ENCODE measurements at regions of chr18 and their contacts with region 1.

Region 1: GRCh38 chr18:77132371-77133050 is at the start of gene MBP:
- DNase-seq: peak; percentile 76
- ATAC-seq: peak; percentile 66
- H3K4me3 Mint-ChIP-seq: peak within 1 kb of the TSS; percentile 97
- H3K27ac Mint-ChIP-seq: peak within 1 kb of the TSS; percentile 94
- H3K4me1 Mint-ChIP-seq: peaks cover 62% of the 10 kb centered on the region
- H3K27me3 Mint-ChIP-seq: no peaks in the 10 kb centered on the region
- total RNA-seq, gene MBP: 86.5 to 87.0 TPM

Region 2: DNA sequence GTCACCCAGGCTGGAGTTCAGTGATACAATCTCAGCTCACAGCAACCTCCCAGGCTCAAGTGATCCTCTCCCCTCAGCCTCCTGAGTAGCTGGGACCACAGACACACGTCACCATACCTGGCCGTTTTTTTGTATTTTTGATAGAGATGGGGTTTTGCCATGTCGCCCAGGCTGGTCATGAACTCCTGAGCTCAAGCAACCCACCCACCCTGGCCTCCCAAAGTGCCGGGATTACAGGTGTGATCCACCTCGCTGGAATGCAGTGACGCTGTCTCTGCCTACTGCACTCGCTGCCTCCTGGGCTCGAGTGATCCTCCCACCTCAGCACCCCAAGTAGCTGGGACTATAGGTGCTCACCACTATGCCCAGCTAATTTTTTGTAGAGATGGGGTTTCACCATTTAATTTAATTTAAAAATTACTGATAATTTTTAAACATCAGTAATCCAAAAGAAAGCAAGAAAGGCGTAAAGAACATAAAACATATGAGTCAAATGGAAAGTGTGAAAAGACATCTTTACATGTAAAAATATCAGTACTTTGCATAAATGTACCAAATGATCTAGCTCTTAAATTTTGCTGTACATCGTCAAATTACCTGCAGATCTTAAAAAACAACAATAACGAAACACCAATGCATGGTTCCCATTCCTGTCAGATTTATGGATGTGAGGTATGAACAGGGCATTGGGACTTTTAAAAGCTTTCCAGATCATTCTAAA is 312.9 kb before region 1 on chr18:
- CTCF ChIA-PET with region 1: no interaction called
- POLR2A ChIA-PET with region 1: no interaction called
- DNase-seq: no peak
- ATAC-seq: no peak
- H3K4me3 Mint-ChIP-seq: peak overlapping the region; percentile 48
- H3K27ac Mint-ChIP-seq: peak overlapping the region; percentile 50
- H3K4me1 Mint-ChIP-seq: peaks cover 33% of the 10 kb centered on the region
- H3K27me3 Mint-ChIP-seq: no peaks in the 10 kb centered on the region

Region 3: GRCh38 chr18:77054606-77055428 is 77.7 kb before region 1 on chr18:
- CTCF ChIA-PET with region 1: interaction called, 9 read pairs
- POLR2A ChIA-PET with region 1: interaction called, 10 read pairs
- DNase-seq: peak; percentile 93
- ATAC-seq: peak; percentile 91
- H3K4me3 Mint-ChIP-seq: peak overlapping the region; percentile 85
- H3K27ac Mint-ChIP-seq: peak overlapping the region; percentile 100
- H3K4me1 Mint-ChIP-seq: peaks cover 71% of the 10 kb centered on the region
- H3K27me3 Mint-ChIP-seq: no peaks in the 10 kb centered on the region

Region 4: GRCh38 chr18:77067291-77068061 is 65.0 kb before region 1 on chr18:
- CTCF ChIA-PET with region 1: interaction called, 26 read pairs
- POLR2A ChIA-PET with region 1: interaction called, 101 read pairs
- DNase-seq: peak; percentile 80
- ATAC-seq: peak; percentile 72
- H3K4me3 Mint-ChIP-seq: peak overlapping the region; percentile 61
- H3K27ac Mint-ChIP-seq: peak overlapping the region; percentile 95
- H3K4me1 Mint-ChIP-seq: peaks cover 99% of the 10 kb centered on the region
- H3K27me3 Mint-ChIP-seq: no peaks in the 10 kb centered on the region

Region 5: DNA sequence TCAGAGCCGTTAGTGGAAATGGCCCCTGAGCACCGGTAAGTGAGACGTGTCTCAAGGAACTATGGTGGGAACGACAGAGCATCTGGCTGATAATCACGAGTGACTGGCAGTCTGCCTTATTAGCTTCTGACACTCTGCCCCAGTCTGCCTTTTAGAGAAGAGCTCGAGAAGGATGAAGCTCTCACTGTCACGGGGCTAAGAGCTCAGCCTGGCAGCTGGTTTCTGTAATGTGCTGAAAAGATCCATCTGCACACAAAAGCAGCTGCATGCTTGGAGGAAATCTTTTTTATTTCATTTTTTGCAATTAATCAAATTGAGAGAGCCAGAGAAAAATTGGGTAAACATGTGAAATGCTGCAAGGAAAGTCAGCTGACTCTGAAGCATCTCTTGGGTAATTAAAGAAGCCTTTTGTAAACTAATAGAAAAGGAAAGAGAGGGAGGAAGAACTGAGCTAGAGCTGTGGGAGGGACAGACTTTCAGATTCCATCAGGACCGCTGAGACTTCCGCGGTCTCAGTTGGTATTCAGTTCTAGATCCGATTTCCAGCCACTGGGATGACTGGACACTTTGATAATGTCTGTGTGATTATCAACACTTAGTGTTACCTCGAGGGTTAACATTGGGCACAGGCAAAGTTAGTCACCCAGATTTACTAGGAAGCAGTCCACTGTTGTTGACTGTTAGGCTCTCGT is 24.4 kb before region 1 on chr18:
- CTCF ChIA-PET with region 1: interaction called, 6 read pairs
- POLR2A ChIA-PET with region 1: interaction called, 58 read pairs
- DNase-seq: no peak
- ATAC-seq: peak; percentile 7
- H3K4me3 Mint-ChIP-seq: peak overlapping the region; percentile 41
- H3K27ac Mint-ChIP-seq: peak overlapping the region; percentile 73
- H3K4me1 Mint-ChIP-seq: peaks cover 91% of the 10 kb centered on the region
- H3K27me3 Mint-ChIP-seq: no peaks in the 10 kb centered on the region

Region 6: DNA sequence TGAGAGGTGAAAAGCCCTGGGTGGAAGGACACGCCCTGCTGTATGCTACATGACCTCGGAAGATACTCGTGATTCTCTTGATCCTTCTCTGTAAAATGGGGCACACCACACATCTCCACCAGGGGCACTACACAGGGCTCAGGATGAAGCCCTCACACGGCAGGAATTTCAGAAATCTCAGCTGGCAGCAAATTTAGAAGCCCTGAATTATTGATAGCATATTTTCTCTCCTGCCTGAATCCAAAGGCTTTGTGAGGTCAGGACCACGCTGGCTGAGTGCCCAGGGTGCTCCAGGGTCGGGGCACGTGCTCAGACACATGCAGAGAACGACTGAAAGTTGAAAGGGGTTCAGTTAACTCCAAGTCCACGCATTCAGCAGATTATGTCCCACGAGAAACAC is 75.0 kb after region 1 on chr18:
- CTCF ChIA-PET with region 1: interaction called, 8 read pairs
- POLR2A ChIA-PET with region 1: interaction called, 11 read pairs
- DNase-seq: peak; percentile 55
- ATAC-seq: peak; percentile 68
- H3K4me3 Mint-ChIP-seq: no peak overlapping the region
- H3K27ac Mint-ChIP-seq: no peak overlapping the region
- H3K4me1 Mint-ChIP-seq: peaks cover 49% of the 10 kb centered on the region
- H3K27me3 Mint-ChIP-seq: no peaks in the 10 kb centered on the region

Region 7: GRCh38 chr18:77271576-77272481 is 139.3 kb after region 1 on chr18:
- CTCF ChIA-PET with region 1: no interaction called
- POLR2A ChIA-PET with region 1: no interaction called
- DNase-seq: no peak
- ATAC-seq: no peak
- H3K4me3 Mint-ChIP-seq: no peak overlapping the region
- H3K27ac Mint-ChIP-seq: no peak overlapping the region
- H3K4me1 Mint-ChIP-seq: no peaks in the 10 kb centered on the region
- H3K27me3 Mint-ChIP-seq: peaks cover 28% of the 10 kb centered on the region

Measured in activated CD8-positive, alpha-beta T cell treated with anti-CD3 and anti-CD28 coated beads, Interleukin-2, amount 10 ng/mL, durations not matched to agents 7 days and 5 days (primary cell).